MCF 10A (cell line): ENCODE measurements at regions of chr18 and their contacts with region 1.

Region 1: GRCh38 chr18:26548429-26549262 is at the start of gene KCTD1:
- DNase-seq: peak; percentile 85
- H3K4me3 Mint-ChIP-seq: peak within 1 kb of the TSS; percentile 93
- H3K27ac Mint-ChIP-seq: peak within 1 kb of the TSS; percentile 75
- H3K4me1 Mint-ChIP-seq: peaks cover 24% of the 10 kb centered on the region
- H3K27me3 Mint-ChIP-seq: no peaks in the 10 kb centered on the region
- CTCF ChIP-seq: no peak
- total RNA-seq, gene KCTD1: 29.5 and 37.9 TPM in 2 replicates

Region 2: GRCh38 chr18:26383454-26384270 is 165.0 kb before region 1 on chr18:
- CTCF ChIA-PET with region 1: interaction called, 20 read pairs
- POLR2A ChIA-PET with region 1: interaction called, 6 read pairs
- intact Hi-C with region 1: loop called (anchors 1 kb)
- DNase-seq: peak; percentile 65
- H3K4me3 Mint-ChIP-seq: no peak overlapping the region
- H3K27ac Mint-ChIP-seq: no peak overlapping the region
- H3K4me1 Mint-ChIP-seq: peaks cover 8% of the 10 kb centered on the region
- H3K27me3 Mint-ChIP-seq: no peaks in the 10 kb centered on the region
- CTCF ChIP-seq: peak; percentile 69

Region 3: GRCh38 chr18:26438980-26439379 is 109.7 kb before region 1 on chr18:
- CTCF ChIA-PET with region 1: interaction called, 12 read pairs
- POLR2A ChIA-PET with region 1: interaction called, 27 read pairs
- intact Hi-C with region 1: loop called (anchors 5 kb)
- DNase-seq: no peak
- H3K4me3 Mint-ChIP-seq: no peak overlapping the region
- H3K27ac Mint-ChIP-seq: no peak overlapping the region
- H3K4me1 Mint-ChIP-seq: peaks cover 48% of the 10 kb centered on the region
- H3K27me3 Mint-ChIP-seq: no peaks in the 10 kb centered on the region
- CTCF ChIP-seq: no peak

Region 4: DNA sequence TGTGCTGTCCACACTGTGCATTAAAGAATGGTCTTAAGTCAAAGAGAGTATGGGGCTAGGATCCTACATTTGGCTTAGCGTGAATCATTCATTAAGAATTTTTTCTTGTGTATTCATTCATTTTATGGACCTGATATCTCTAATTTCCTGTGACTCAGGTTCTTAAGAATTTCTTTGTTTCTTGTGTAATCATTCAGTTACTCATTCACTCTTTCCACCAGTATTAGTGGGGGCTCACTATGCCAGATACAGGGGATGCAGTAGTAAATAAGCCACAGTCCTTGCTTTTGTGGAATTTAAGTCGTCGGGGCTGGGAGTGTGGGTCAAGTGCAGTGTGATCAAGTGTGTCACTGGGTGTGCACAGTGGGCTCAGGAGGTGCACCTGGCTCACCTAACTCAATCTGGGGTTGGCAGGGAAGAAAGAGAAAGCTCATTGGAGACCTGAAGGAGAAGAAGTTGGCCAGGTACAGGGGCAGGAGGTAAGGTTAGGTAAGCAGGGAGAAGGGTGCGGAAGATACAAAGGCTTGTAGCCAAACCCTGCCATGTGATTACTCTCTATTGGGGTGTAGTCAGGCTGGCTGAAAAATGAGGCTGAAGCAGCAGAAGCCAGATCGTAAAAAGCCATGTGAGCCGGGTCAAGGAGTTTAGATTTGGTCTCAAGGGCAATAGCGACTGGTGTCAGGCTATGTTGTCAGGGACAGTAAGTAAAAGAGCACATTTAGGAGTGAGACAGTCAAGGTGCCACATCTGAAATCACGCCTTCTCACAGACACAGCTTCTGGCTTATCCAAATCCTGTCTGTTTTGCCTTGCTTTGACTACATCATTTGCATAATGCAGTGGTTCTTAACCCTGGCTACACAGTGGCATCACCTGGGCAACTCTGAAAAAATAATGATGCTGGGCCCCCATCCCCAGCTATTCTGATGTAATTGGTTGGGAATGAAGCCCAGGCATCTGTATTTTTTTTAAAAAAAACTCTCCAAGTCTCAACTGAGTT is 67.5 kb before region 1 on chr18:
- CTCF ChIA-PET with region 1: interaction called, 19 read pairs
- POLR2A ChIA-PET with region 1: interaction called, 108 read pairs
- intact Hi-C with region 1: loop called (anchors 1 kb)
- DNase-seq: peak; percentile 88
- H3K4me3 Mint-ChIP-seq: peak overlapping the region; percentile 41
- H3K27ac Mint-ChIP-seq: peak overlapping the region; percentile 88
- H3K4me1 Mint-ChIP-seq: peaks cover 46% of the 10 kb centered on the region
- H3K27me3 Mint-ChIP-seq: no peaks in the 10 kb centered on the region
- CTCF ChIP-seq: no peak

Region 5: DNA sequence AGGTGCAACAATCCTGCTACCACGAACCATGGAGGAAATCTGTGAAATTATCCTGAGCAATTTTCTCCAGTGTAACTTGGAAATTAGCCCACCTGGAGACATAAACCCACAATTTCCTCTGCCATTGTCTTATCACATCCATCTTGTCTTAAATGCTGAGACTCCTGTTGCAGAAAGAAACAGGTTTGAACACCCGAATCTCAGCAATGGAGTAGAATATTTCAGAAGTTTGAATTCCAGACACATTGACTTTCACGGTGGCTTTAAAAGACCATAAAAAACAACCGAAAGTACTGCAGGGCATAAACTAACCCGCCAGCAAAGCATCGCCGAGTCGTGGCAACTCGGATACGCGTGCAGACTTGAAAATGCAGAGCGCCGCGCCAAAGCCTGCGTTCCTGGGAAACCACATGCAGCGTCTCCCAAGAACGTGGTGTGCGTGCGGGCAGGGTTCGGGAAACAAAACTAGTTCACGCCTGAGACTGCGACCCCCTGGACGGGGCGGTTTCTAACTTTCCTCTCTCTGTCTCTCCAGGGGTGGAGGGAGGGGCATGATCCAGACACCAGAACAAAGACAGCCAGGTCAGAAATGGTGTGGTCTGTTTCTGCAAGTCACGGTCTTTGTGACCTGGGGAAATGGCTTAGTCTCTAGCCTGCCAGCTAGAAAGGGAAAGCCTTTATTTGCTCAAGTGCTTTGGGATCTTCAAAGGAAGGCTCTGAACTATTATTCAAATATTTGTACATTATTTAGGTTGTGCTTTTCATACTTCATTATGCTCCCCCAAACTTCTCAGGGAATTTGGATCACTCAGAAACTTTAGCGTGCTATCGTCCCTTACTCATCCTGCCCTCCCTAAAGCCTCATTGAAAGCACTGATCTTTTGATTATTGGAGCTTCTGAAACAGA is 26.6 kb after region 1 on chr18:
- CTCF ChIA-PET with region 1: interaction called, 4 read pairs
- POLR2A ChIA-PET with region 1: interaction called, 14 read pairs
- intact Hi-C with region 1: no loop called
- DNase-seq: peak; percentile 69
- H3K4me3 Mint-ChIP-seq: peak overlapping the region; percentile 75
- H3K27ac Mint-ChIP-seq: peak overlapping the region; percentile 72
- H3K4me1 Mint-ChIP-seq: peaks cover 17% of the 10 kb centered on the region
- H3K27me3 Mint-ChIP-seq: no peaks in the 10 kb centered on the region
- CTCF ChIP-seq: no peak

Region 6: GRCh38 chr18:26650310-26651268 is 101.9 kb after region 1 on chr18:
- CTCF ChIA-PET with region 1: interaction called, 3 read pairs
- POLR2A ChIA-PET with region 1: interaction called, 3 read pairs
- intact Hi-C with region 1: loop called (anchors 1 kb)
- DNase-seq: no peak
- H3K4me3 Mint-ChIP-seq: no peak overlapping the region
- H3K27ac Mint-ChIP-seq: no peak overlapping the region
- H3K4me1 Mint-ChIP-seq: peaks cover 5% of the 10 kb centered on the region
- H3K27me3 Mint-ChIP-seq: peaks cover 15% of the 10 kb centered on the region
- CTCF ChIP-seq: no peak

Region 7: DNA sequence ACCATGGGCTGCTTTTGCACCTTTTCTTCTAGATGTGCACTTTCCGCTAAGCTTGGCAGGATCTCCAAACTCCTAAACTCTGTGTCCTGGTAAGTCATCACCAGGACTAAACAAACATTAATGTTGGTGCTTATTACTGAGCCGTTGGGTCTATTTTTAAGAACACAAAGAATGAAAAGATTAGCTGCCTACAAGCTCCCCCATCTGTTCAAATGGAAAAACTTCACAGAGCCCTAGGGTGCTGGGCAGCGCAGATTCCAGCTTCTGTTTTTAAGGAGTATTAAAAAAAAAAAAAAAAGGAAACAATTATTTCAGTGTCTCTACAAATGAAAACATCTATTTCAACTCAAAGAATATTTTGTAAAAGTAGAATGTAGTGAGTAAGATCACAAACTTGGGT is 414.6 kb after region 1 on chr18:
- CTCF ChIA-PET with region 1: no interaction called
- POLR2A ChIA-PET with region 1: no interaction called
- intact Hi-C with region 1: loop called (anchors 10 kb)
- DNase-seq: peak; percentile 33
- H3K4me3 Mint-ChIP-seq: no peak overlapping the region
- H3K27ac Mint-ChIP-seq: no peak overlapping the region
- H3K4me1 Mint-ChIP-seq: no peaks in the 10 kb centered on the region
- H3K27me3 Mint-ChIP-seq: no peaks in the 10 kb centered on the region
- CTCF ChIP-seq: peak; percentile 37